ENCODE measurements at regions of chr5 and their contacts with region 1.

Region 1: DNA sequence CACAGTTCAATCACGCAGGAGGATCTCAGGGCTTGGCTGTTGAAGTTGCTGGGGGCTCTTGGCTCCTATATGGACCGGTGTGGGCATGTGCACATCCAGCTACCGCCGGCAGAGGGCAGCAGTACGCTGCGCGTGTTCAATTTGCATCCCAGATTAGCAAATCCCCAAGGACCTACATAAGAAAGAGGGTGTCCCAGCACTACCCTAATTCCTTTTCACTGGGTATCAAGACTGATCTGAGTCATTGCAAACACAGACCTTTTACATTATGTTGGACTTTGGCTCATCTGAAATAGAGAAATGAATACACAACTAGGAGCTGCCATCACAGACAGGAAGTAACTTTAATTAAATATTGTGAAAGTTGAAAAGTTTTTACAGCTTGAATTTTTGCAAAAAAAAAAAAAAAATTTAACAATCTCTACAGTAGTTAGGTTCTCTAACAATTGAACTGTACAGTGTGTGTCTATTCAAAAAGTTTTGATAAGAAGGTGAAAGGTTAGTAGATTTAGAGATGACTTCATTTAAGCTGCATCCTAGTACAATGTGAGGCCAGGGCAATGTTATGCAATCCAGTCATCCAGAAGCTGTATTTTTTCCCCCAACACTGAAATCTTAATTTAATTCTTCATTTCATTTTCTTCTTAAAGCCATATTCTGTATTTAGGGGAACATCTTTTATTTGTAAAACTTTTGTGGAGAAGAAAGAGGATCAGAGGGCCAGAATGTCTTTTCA is 404.0 kb downstream of the EBF1 start:
- DNase-seq: peak; percentile 90
- H3K4me3 ChIP-seq: no peak overlapping the region
- H3K27ac ChIP-seq: peak overlapping the region; percentile 50
- H3K4me1 ChIP-seq: peaks cover 45% of the 10 kb centered on the region
- CTCF ChIP-seq: peak; percentile 100

Region 2: DNA sequence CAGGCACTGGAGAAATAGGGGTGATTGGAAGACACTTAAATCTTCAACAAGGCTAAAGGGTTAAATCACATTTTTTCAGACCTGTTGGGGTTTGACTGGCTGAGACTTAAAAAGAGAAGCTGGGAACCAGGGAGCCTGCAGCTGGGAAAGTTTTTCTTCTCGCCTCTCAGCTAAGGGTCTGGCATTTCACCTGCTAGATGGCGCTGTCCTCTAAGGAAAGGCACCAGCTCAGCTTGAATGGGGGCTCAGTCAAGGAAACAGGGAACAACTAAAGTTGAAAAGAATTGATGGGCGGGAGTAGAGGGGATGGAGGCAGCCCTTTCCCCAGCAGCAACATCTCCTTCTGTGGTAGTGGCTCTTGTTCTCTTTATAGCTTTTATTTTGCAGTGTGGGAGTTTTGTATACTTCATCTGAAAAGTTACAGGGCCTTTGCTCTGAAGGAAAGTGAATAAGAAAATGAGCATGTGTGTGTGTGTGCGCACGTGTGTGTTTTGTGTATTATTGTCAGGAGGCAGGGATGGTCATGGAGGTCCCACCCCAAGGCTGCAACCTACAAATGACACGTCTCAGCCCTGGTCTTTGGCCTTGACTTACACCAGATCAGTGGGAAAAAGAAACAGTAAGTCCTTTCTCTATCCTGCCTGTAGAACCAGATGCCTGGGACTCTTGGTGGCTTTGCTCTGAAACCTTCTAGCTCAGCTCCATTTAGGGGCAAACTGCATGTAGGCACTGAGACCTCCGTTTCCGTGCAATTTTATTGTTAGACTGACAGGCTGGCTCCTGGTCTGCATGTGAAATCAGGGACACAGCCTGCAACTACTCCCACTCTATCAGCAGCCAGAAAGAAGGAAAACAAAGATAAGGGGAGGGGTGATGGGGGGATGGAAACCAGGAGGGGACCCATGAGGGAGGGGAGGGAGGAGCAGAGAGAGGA is 520.6 kb before region 1 on chr5:
- CTCF ChIA-PET with region 1: interaction called, 9 read pairs
- POLR2A ChIA-PET with region 1: interaction called, 8 read pairs
- intact Hi-C with region 1: loop called (anchors 1 kb)
- DNase-seq: peak; percentile 90
- H3K4me3 ChIP-seq: no peak overlapping the region
- H3K27ac ChIP-seq: peak overlapping the region; percentile 31
- H3K4me1 ChIP-seq: peaks cover 49% of the 10 kb centered on the region
- CTCF ChIP-seq: peak; percentile 95

Region 3: DNA sequence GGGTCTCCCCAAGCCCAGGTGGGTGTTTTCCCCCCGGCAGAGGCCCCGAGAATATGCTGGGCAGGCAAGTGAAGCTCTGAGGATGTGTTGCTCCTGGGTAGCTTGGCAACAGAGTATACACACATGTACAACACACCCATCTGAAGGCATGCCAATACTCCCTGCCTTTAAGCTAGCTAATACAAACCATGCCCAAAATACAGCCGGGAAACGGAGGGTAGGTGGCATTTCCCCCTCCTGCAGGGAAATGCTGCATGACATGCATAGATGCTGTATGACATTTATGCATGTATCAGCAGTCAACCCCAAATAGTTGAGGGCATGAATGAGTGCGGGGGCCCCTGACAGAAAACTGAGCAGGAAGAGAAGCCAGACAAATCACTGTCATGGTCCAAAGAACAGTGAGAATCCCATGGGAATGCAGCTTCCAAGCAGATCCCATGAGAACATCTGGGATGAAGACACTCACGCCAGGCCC is 210.1 kb before region 1 on chr5:
- CTCF ChIA-PET with region 1: no interaction called
- POLR2A ChIA-PET with region 1: no interaction called
- intact Hi-C with region 1: no loop called
- DNase-seq: no peak
- H3K4me3 ChIP-seq: no peak overlapping the region
- H3K27ac ChIP-seq: no peak overlapping the region
- H3K4me1 ChIP-seq: peaks cover 9% of the 10 kb centered on the region
- CTCF ChIP-seq: no peak

Region 4: DNA sequence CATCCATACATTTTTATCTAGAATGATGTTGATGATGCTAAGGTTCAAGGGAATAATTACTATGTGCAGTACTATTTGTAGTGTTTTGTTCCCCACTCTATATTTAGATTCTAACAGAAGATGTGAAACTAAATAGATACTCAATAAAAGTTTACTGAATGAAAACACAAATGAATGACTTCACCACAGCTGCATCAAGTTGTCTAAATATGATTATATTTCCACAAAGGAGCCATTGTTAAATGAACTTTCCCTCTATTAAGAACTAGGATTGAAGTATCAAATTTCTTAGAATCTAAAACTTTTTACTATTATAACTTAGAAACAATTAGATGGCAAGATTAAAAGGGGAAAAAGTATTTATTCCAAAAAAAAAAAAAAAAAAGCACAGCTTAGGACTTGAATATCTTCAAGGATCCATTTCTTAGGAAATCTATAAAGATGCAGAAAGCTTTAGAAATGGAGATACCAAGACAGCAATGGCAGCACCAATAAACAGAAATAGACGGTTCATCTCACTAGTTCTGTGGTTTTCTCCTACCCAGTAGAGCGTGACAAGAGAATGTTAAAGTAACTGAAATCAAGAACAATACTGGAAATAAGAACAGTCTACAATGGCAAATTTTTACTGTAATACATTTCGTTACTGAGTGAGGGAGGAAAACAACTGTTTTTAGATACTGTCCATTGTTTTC is 56.3 kb after region 1 on chr5:
- CTCF ChIA-PET with region 1: no interaction called
- POLR2A ChIA-PET with region 1: interaction called, 4 read pairs
- intact Hi-C with region 1: loop called (anchors 2 kb)
- DNase-seq: peak; percentile 91
- H3K4me3 ChIP-seq: peak overlapping the region; percentile 57
- H3K27ac ChIP-seq: peak overlapping the region; percentile 99
- H3K4me1 ChIP-seq: peaks cover 83% of the 10 kb centered on the region
- CTCF ChIP-seq: no peak

Region 5: DNA sequence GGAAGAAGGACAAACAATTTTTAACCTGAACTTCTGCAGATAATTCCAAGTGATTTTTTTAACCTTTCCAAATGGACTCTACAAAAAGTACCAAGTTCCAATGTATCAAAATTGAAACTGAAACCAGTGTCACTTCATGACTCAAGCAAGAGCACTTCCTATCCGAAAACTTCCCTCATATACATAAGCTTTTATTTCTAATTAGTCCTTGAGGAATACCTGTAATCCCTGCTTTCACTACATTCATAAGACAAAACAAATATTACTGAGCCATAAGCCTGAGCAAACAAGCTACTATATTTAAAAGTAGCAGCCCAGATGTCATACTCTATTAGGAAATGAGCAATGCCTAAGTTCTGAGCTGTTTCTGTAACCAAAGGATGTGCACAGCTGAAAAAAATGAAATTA is 179.5 kb after region 1 on chr5:
- CTCF ChIA-PET with region 1: interaction called, 3 read pairs
- POLR2A ChIA-PET with region 1: interaction called, 5 read pairs
- intact Hi-C with region 1: loop called (anchors 2 kb)
- DNase-seq: peak; percentile 57
- H3K4me3 ChIP-seq: peak overlapping the region; percentile 60
- H3K27ac ChIP-seq: peak overlapping the region; percentile 92
- H3K4me1 ChIP-seq: peaks cover 74% of the 10 kb centered on the region
- CTCF ChIP-seq: no peak

Region 6: GRCh38 chr5:159049844-159050315 is 354.1 kb after region 1 on chr5:
- CTCF ChIA-PET with region 1: no interaction called
- POLR2A ChIA-PET with region 1: interaction called, 3 read pairs
- intact Hi-C with region 1: loop called (anchors 2 kb)
- DNase-seq: peak; percentile 51
- H3K4me3 ChIP-seq: peak overlapping the region; percentile 50
- H3K27ac ChIP-seq: peak overlapping the region; percentile 86
- H3K4me1 ChIP-seq: peaks cover 86% of the 10 kb centered on the region
- CTCF ChIP-seq: peak; percentile 81